ENCODE measurements at regions of chr12 and their contacts with region 1.

Region 1: GRCh38 chr12:78181544-78182162 is 351.0 kb downstream of the NAV3 start:
- DNase-seq: peak; percentile 51
- H3K4me3 Mint-ChIP-seq: no peak overlapping the region
- H3K27ac Mint-ChIP-seq: no peak overlapping the region
- H3K4me1 Mint-ChIP-seq: peaks cover 8% of the 10 kb centered on the region
- H3K27me3 Mint-ChIP-seq: no peaks in the 10 kb centered on the region
- CTCF ChIP-seq: peak; percentile 50

Region 2: DNA sequence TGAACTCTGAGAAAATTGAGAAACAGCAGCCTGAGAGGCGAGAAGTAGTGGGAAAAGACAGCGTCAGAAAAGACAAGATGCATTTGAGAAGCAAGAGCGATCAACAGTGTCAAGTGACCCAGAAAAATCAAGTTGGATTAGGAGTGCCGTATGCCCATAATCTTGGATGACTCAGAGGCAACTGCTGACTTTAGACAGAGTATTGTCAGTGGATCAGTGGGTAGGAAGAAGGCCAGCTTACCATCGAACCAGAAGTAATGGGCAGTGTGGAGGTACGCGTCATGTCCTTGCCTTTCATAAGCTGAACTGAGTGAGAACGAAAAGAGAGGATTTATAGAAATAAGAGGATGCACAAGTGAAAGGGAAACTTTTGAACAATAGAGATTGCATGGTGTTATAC is 502.0 kb before region 1 on chr12:
- CTCF ChIA-PET with region 1: no interaction called
- intact Hi-C with region 1: no loop called
- DNase-seq: no peak
- H3K4me3 Mint-ChIP-seq: no peak overlapping the region
- H3K27ac Mint-ChIP-seq: no peak overlapping the region
- H3K4me1 Mint-ChIP-seq: no peaks in the 10 kb centered on the region
- H3K27me3 Mint-ChIP-seq: no peaks in the 10 kb centered on the region
- CTCF ChIP-seq: no peak

Region 3: DNA sequence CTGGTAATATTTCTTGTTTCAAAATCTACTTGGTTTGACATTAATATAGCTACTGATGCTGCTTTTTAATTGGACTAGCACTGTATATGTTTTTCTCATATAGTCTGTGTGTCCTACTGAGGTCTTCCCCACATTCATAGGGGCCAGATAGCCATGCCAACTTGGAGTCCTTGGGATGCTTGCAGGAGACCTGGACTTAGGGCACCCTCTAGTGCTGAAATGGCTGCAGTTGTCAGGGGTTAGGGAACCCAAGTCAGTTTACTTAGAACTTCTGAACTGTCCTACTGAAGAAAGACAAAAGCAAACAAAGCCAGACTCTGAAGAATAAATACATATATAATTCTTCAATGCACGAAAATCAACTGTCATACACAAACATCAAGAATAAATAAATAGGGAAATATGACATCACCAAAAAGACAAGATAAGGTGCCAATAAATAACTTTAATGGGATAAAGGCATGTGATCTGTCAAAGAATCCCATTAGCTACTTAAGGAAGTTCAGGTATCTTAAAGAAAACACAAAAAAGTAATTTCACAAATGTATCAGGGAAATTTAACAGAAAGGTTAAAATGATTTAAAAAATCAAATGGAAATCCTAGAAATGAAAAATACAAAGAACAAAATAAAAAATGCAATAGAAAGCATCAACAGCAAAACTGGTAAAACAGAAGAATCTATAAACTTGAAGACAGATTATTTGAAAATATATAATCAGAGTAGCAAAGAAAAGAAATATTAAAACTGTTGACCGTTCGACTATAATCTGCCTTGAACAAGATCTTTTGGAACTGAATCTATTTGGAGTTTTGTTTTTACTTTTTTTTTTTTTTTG is 403.3 kb after region 1 on chr12:
- CTCF ChIA-PET with region 1: no interaction called
- intact Hi-C with region 1: loop called (anchors 1 kb)
- DNase-seq: peak; percentile 43
- H3K4me3 Mint-ChIP-seq: no peak overlapping the region
- H3K27ac Mint-ChIP-seq: no peak overlapping the region
- H3K4me1 Mint-ChIP-seq: no peaks in the 10 kb centered on the region
- H3K27me3 Mint-ChIP-seq: no peaks in the 10 kb centered on the region
- CTCF ChIP-seq: peak; percentile 50

Region 4: GRCh38 chr12:79006306-79006705 is 824.7 kb after region 1 on chr12:
- CTCF ChIA-PET with region 1: no interaction called
- intact Hi-C with region 1: loop called (anchors 1 kb)
- DNase-seq: no peak
- H3K4me3 Mint-ChIP-seq: no peak overlapping the region
- H3K27ac Mint-ChIP-seq: no peak overlapping the region
- H3K4me1 Mint-ChIP-seq: no peaks in the 10 kb centered on the region
- H3K27me3 Mint-ChIP-seq: no peaks in the 10 kb centered on the region
- CTCF ChIP-seq: no peak

Region 5: DNA sequence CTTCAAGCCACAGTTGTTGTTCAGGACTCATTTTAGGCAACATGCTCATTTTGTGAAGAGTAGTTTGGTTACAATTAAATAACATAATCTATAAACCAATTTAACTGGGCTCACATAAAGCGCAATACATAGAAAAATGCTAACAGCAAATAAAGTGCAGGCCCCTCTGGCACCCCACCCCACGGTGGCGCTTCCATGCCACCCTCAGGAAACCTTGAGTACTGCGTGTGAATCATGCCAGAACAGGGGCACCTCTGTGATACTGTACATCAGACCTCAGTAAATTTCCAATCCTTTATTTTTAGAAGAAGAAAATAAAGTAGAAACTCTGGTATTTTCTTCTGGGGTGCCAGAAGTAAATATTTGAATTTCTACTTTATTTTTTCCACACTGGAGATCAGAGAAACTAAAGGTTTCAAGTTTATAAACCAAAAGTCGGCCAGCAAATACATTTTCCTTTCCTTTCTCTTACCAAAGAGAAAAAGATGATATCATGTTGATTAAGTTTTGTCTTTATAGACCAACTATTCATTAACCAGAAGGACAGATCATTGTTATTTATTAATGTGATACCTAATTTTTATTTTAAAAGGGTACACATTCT is 1192.3 kb after region 1 on chr12:
- CTCF ChIA-PET with region 1: no interaction called
- intact Hi-C with region 1: loop called (anchors 1 kb)
- DNase-seq: peak; percentile 72
- H3K4me3 Mint-ChIP-seq: no peak overlapping the region
- H3K27ac Mint-ChIP-seq: no peak overlapping the region
- H3K4me1 Mint-ChIP-seq: no peaks in the 10 kb centered on the region
- H3K27me3 Mint-ChIP-seq: no peaks in the 10 kb centered on the region
- CTCF ChIP-seq: peak; percentile 91